ENCODE measurements at regions of chr5 and their contacts with region 1.

Region 1: DNA sequence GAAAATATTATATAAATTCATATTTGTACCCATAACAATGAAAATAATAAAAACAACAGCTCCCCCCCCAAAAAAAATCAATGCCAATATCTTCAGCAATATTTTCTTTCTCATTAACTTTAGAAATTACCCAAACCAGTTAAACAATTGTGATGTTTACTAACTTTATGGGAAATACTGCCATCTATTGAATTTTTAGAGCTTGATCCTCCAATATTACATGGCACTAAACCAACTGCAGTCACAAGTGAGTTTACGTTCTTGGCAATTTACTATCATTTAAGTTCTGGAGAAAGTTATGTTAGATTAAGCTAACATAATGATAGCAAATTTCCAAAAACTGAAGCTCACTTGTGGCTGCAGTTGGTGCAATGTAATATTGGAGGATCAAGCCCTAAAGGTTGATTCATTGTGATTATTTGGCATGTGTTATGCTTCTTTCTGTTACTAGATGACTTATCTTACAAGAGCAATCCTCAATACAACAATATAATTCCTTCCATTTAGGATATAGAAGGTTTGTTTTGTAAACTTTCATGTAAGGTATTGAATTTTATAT is 379.5 kb downstream of the CDH18 start:
- DNase-seq: peak; percentile 58
- ATAC-seq: no peak
- H3K4me3 ChIP-seq: no peak overlapping the region
- H3K27ac ChIP-seq: no peak overlapping the region
- H3K4me1 ChIP-seq: 0 out of 2 replicates have a peak, but pooled peaks cover 3% of the 10 kb centered on the region
- H3K27me3 ChIP-seq: no peaks in the 10 kb centered on the region
- CTCF ChIP-seq: peak; percentile 77

Region 2: DNA sequence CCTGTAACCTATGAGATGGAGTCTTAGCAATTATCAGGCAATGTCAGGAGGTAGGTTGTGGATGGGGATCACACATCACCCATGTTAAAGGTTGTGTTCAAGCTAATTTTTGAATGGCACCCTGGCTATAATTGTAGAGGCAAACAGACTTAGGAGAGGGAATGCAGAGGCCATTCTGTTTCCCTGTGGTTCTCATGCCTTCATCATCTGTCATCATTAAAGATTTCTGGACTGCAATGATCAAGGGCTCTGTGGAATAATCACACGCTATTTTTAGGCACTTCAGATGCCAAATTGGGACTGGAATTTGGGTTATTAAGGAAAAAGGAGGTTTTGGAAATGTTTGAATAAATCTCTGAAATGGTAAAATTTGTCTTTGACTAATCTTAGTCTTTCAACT is 908.8 kb before region 1 on chr5:
- CTCF ChIA-PET with region 1: no interaction called
- POLR2A ChIA-PET with region 1: no interaction called
- intact Hi-C with region 1: loop called (anchors 5 kb)
- DNase-seq: no peak
- ATAC-seq: no peak
- H3K4me3 ChIP-seq: no peak overlapping the region
- H3K27ac ChIP-seq: no peak overlapping the region
- H3K4me1 ChIP-seq: peaks cover 5% of the 10 kb centered on the region
- H3K27me3 ChIP-seq: no peaks in the 10 kb centered on the region
- CTCF ChIP-seq: no peak

Region 3: DNA sequence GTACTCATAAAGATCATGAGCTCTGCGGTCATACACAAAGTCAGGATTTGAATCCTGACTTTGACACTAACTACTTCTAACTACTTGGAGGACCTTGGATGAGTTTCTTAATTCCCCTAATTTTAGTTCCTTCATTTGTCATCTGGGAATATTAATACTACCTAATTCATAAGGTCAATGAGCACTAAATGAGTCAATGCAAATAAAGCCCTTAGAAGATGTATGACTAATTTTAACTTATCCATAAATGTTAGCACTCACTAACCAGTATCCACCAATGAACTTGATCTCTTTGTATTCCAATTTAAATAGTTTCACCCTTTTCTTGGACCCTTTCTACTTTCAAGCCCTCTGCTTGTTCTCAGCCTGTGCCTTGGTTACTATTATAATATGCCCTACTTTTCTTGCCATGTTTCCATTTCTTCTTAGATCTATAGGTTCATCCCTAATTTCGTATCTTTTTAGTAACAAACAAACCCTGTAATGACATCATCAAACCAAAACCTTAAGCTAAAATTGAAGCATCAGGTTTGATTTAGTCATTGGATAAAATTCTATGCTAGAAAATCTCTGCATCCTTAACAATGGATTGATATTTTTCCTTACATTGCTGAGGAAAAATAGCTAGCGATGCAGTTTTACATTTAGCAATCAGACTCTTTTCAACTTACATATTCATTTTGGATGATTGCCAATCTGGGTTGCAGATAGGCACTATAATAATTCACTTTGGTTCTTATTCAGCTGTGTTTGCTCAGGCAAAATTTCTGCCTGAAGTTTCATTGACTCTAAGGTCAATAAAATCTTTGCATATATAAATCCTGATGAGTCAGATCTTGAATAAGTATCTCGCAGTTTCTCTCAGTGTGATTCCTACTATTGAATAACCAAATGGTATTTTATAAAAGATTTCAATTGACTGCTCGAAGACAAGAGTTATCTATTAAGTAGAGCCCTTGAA is 726.6 kb before region 1 on chr5:
- CTCF ChIA-PET with region 1: no interaction called
- POLR2A ChIA-PET with region 1: no interaction called
- intact Hi-C with region 1: loop called (anchors 10 kb)
- DNase-seq: peak; percentile 90
- ATAC-seq: peak; percentile 85
- H3K4me3 ChIP-seq: peak overlapping the region; percentile 28
- H3K27ac ChIP-seq: peak overlapping the region; percentile 92
- H3K4me1 ChIP-seq: peaks cover 27% of the 10 kb centered on the region
- H3K27me3 ChIP-seq: no peaks in the 10 kb centered on the region
- CTCF ChIP-seq: no peak

Region 4: GRCh38 chr5:19181027-19181426 is 427.5 kb before region 1 on chr5:
- CTCF ChIA-PET with region 1: no interaction called
- POLR2A ChIA-PET with region 1: no interaction called
- intact Hi-C with region 1: loop called (anchors 5 kb)
- DNase-seq: no peak
- ATAC-seq: no peak
- H3K4me3 ChIP-seq: no peak overlapping the region
- H3K27ac ChIP-seq: no peak overlapping the region
- H3K4me1 ChIP-seq: no peaks in the 10 kb centered on the region
- H3K27me3 ChIP-seq: no peaks in the 10 kb centered on the region
- CTCF ChIP-seq: peak; percentile 34

Region 5: GRCh38 chr5:19314851-19315327 is 293.6 kb before region 1 on chr5:
- CTCF ChIA-PET with region 1: no interaction called
- POLR2A ChIA-PET with region 1: no interaction called
- intact Hi-C with region 1: loop called (anchors 5 kb)
- DNase-seq: peak; percentile 97
- ATAC-seq: peak; percentile 98
- H3K4me3 ChIP-seq: no peak overlapping the region
- H3K27ac ChIP-seq: peak overlapping the region; percentile 62
- H3K4me1 ChIP-seq: peaks cover 20% of the 10 kb centered on the region
- H3K27me3 ChIP-seq: no peaks in the 10 kb centered on the region
- CTCF ChIP-seq: peak; percentile 54